GM12878 (cell line): ENCODE measurements at regions of chr11 and their contacts with region 1.

Region 1: DNA sequence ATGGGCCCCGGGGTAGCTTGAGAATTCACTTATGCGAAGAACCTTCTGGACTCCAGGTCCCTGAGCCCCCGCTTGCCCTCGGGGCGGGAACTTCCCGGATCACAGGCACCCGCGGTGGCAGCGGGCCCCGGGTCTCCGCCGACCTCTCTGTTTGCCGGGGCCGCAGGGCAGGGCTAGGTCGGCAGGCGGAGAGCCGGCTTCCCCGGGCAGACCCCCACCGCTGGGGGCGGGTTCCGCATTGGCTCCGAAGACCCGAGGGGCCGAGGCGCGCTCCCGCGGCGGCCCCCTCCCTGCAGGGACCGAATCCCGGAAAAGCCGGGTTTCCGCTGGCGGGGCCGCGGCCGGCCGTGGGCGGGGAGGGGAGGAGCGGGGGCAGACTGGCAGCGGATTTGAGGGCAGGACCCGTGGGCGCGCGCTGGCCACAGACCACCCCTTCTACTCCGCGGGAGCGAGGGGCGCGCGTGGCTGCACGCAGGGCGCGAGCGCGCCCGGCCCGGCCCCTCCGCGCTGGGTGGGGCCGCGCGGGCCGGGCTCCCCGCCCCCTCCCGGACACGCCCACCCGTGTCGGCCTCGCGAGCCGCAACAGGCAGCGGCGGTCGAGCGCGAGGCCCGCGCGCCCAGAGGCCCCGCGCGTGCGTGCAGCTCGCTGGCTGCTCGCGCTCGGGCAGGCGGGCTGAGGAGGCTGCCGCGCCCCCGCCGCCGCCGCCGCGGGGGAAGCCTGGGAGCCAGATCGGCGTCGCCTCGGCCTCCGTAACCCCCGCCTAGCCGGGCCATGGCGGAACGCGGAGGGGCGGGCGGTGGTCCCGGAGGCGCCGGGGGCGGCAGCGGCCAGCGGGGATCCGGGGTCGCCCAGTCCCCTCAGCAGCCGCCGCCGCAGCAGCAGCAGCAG is at the start of gene PACS1:
- DNase-seq: no peak
- ATAC-seq: peak; percentile 61
- H3K4me3 ChIP-seq: peak within 1 kb of the TSS; percentile 94
- H3K27ac ChIP-seq: peak within 1 kb of the TSS; percentile 83
- H3K4me1 ChIP-seq: peaks cover 26% of the 10 kb centered on the region
- H3K27me3 ChIP-seq: no peaks in the 10 kb centered on the region
- CTCF ChIP-seq: no peak
- EP300 ChIP-seq: no peak
- POLR2A ChIP-seq: peak; percentile 68
- RAD21 ChIP-seq: no peak
- polyA plus RNA-seq, gene PACS1: 1.1 to 1.2 TPM

Region 2: DNA sequence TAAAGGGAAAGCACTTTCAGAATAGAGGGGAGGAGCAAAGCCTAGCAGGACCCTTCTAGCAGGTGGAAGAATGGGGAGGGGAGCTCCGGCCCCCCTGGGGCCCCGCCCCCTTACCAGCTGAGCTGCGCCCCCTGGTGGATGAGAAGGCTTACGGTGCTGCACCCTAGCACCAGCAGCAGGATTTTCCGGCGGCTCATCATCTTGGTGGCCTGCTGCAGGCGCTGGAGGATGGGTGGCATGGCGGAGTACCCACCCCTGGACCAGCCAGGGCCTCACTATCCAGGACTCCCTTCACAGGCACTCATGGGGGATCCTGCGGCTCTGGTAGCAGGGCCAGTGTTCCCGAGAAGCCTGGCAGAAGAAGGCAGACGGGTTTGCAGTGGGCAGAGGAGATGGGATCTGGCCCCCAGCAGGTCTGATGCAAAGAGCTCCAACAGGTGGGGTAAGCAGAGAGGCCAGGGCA is 24.8 kb before region 1 on chr11:
- CTCF ChIA-PET with region 1: interaction called, 71 read pairs
- POLR2A ChIA-PET with region 1: interaction called, 3 read pairs
- RAD21 ChIA-PET with region 1: interaction called, 21 read pairs
- SMC1A ChIA-PET with region 1: interaction called, 3 read pairs
- in situ Hi-C with region 1: no loop called
- intact Hi-C with region 1: no loop called
- DNase-seq: no peak
- ATAC-seq: peak; percentile 98
- H3K4me3 ChIP-seq: no peak overlapping the region
- H3K27ac ChIP-seq: no peak overlapping the region
- H3K4me1 ChIP-seq: peaks cover 2% of the 10 kb centered on the region; the same call in 1 of the 2 replicates
- H3K27me3 ChIP-seq: no peaks in the 10 kb centered on the region
- CTCF ChIP-seq: peak; percentile 86 to 94 (median 89)
- EP300 ChIP-seq: no peak
- POLR2A ChIP-seq: no peak
- RAD21 ChIP-seq: peak; percentile 45

Region 3: DNA sequence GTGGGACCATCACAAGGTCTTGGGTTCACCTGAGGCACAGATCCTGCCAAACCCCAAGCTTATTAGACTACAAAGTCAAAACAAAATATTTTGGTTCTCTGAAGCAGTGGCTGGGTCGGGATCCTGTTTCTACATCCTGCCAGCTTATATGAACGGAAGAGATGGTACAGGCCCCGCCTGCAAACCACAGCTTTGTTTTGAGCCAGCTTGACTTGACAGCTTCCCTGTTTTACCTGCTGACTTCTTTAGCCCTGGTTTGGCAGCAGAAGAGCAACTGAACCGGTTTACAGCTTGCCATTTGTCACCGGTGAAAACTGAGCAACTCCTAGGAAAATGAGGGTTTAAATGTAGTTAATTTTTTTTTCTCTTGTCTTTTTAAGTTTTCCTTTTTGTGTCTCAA is 11.5 kb after region 1 on chr11:
- CTCF ChIA-PET with region 1: interaction called, 29 read pairs
- POLR2A ChIA-PET with region 1: interaction called, 10 read pairs
- RAD21 ChIA-PET with region 1: interaction called, 20 read pairs
- SMC1A ChIA-PET with region 1: interaction called, 55 read pairs
- in situ Hi-C with region 1: no loop called
- intact Hi-C with region 1: no loop called
- DNase-seq: no peak
- ATAC-seq: peak; percentile 93
- H3K4me3 ChIP-seq: peak overlapping the region; percentile 8; the same call in 1 of the 2 replicates
- H3K27ac ChIP-seq: peak overlapping the region; percentile 60
- H3K4me1 ChIP-seq: peaks cover 31% of the 10 kb centered on the region
- H3K27me3 ChIP-seq: no peaks in the 10 kb centered on the region
- CTCF ChIP-seq: no peak
- EP300 ChIP-seq: no peak
- POLR2A ChIP-seq: no peak
- RAD21 ChIP-seq: no peak

Region 4: DNA sequence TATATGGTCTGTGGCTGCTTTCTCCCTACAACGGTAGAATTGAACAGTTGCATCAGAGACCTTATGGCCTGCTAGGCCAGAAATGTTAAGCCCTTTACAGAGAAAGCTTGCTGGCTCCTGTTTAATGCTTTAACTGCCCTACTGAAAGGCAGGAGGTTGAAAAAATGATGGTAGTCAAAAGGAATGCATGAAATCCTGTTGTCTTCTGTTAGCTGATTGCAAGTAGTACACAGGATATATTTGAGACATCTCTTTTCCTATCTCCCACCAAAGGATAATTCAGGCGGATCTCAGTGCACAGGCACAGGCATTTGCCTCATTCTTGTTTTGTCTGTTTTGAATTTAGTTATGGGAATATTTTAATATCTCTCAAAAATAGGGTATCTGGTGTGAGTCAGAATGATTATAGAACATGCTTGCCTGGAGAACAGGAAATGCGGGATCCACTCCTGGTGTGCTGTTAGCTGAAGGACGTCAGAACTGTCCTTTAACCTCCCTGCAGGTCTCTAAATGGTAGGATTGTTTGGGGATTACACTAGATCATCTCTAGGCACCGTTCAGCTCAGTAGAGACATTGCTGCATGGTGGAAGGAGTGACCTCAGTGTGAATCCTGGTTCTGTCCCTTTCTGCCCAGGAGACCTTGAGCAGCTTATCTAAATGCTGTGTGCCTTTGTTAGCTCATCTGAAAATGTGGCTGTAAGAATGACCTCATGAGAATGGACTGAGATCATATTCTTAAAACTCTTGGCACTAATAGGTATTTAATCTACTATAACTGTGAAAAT is 49.6 kb after region 1 on chr11:
- CTCF ChIA-PET with region 1: interaction called, 109 read pairs
- POLR2A ChIA-PET with region 1: interaction called, 21 read pairs
- RAD21 ChIA-PET with region 1: interaction called, 45 read pairs
- SMC1A ChIA-PET with region 1: interaction called, 265 read pairs
- in situ Hi-C with region 1: no loop called
- intact Hi-C with region 1: no loop called
- DNase-seq: no peak
- ATAC-seq: peak; percentile 8; the same call in 1 of the 3 replicates
- H3K4me3 ChIP-seq: no peak overlapping the region
- H3K27ac ChIP-seq: no peak overlapping the region; the same call in 1 of the 2 replicates
- H3K4me1 ChIP-seq: peaks cover 51% of the 10 kb centered on the region
- H3K27me3 ChIP-seq: no peaks in the 10 kb centered on the region
- CTCF ChIP-seq: no peak
- EP300 ChIP-seq: no peak
- POLR2A ChIP-seq: no peak
- RAD21 ChIP-seq: no peak

Region 5: DNA sequence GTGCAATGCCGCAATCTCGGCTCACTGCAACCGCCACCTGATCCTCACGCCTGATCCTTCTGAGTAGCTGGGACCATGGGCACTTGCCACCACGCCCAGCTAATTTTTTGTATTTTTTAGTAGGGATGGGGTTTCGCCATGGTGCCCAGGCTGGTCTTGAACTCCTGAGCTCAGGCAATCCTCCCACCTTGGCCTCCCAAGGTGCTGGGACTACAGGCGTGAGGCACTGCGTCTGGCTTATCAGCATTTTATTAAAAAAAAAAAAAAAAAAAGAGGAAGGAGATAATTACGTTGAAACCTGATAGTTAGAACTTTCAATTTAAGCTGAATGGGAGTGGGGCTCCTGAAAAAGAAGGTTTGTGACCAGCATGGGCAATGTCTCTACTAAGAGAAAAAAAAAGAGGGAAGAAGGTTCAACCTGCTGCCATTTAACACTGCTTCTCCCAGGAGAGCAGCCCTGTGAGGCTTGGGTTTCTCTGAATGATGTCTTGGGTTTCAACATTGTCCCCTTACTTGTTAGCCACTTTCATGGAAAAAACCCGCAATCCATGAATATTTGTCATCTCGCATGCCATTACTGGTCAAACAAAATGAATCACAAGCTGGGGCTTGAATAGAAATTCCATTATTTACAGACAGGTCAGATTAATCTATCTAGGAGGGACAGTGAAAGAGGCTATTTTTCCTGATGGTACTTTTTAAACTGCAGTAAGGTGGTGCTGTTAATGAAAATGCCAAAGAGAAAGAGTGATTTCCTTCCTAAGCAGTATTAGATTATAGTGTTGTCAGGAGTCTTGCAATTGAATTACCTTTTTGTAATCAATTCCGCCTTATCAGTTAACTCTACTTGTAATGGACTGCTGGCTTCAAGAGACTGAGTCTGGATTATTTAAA is 72.7 kb after region 1 on chr11:
- CTCF ChIA-PET with region 1: interaction called, 195 read pairs
- POLR2A ChIA-PET with region 1: interaction called, 56 read pairs
- RAD21 ChIA-PET with region 1: interaction called, 81 read pairs
- SMC1A ChIA-PET with region 1: interaction called, 130 read pairs
- in situ Hi-C with region 1: no loop called
- intact Hi-C with region 1: no loop called
- DNase-seq: no peak
- ATAC-seq: no peak
- H3K4me3 ChIP-seq: no peak overlapping the region
- H3K27ac ChIP-seq: no peak overlapping the region
- H3K4me1 ChIP-seq: peaks cover 42% of the 10 kb centered on the region
- H3K27me3 ChIP-seq: no peaks in the 10 kb centered on the region
- CTCF ChIP-seq: no peak
- EP300 ChIP-seq: no peak
- POLR2A ChIP-seq: no peak
- RAD21 ChIP-seq: no peak